ENCODE measurements at regions of chr17 and their contacts with region 1.

Region 1: DNA sequence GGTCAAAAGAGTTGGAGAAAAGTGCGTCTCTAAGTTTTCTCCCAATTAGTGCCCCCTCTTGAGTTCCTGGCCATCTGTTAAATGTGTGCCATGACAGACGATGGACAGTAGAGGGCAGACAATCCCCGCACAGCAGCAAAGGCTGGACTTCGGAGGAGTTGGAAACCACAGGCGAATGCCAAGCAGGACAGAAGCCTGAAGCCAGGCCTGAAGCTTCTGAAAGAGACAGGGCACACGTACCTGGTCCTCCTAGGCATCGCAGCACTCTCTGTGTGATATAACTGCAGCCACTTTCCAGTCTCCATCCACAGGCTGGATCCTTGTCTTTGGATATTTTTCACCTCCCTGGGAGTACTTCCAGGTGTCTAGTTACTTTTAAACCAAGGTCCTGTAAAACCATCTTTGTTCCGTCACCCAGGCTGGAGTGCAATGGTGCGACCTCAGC is 14.5 kb downstream of the C17orf100 start:
- DNase-seq: peak; percentile 72
- H3K4me3 Mint-ChIP-seq: no peak overlapping the region
- H3K27ac Mint-ChIP-seq: no peak overlapping the region
- H3K4me1 Mint-ChIP-seq: peaks cover 15% of the 10 kb centered on the region
- H3K27me3 Mint-ChIP-seq: peaks cover 17% of the 10 kb centered on the region
- CTCF ChIP-seq: peak; percentile 81

Region 2: DNA sequence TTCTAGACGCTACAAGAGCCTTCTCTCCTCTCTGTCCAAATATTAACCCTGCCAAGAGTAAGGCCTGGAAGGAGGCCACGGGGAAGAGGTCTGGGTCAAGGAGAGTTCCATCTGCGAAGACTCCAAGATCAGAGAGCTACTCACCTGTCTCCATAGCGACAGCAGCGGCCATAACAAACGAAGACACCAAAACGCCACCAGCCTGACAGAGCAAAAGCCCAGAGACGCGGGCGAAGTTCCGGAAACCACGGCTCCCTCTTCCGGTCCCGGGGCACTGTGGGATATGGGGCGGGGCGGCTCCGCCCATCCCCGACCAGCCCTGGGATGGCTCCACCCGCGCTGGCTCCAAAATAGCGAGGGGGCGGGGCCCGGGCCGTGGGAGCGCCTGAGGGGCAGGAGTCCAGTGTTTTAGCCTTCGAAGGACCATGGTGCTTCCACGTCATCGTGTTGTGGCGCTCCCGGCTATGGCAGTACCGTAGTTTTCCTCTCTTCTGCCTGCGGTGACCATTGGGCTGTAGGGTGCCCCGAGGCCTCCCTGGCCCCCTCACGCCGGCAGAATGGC is 14.7 kb before region 1 on chr17 and contains the starts of genes C17orf100 and MED31:
- CTCF ChIA-PET with region 1: no interaction called
- intact Hi-C with region 1: no loop called
- DNase-seq: peak; percentile 95
- H3K4me3 Mint-ChIP-seq: peak within 1 kb of the TSS; percentile 89
- H3K27ac Mint-ChIP-seq: peak within 1 kb of the TSS; percentile 92
- H3K4me1 Mint-ChIP-seq: peaks cover 26% of the 10 kb centered on the region
- H3K27me3 Mint-ChIP-seq: no peaks in the 10 kb centered on the region
- CTCF ChIP-seq: no peak
- total RNA-seq, gene C17orf100: 1.8 and 3.1 TPM in 2 replicates
- total RNA-seq, gene MED31: 15.1 and 19.9 TPM in 2 replicates

Region 3: DNA sequence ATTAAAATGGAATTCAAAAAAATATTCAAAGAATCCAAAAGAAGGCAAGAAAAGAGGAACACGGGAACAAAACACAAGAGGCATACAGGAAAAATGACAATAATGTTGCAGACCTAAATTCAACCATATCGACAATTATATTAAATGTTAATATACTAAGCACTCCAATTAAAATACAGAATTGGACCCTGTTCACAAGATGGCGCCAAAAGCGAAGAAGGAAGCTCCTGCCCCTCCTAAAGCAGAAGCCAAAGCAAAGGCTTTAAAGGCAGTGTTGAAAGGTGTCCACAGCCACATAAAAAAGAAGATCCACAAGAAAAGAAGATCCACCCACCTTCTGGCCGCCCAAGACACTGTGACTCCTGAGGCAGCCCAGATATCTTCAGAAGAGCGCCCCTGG is 83.4 kb after region 1 on chr17:
- CTCF ChIA-PET with region 1: no interaction called
- intact Hi-C with region 1: no loop called
- DNase-seq: no peak
- H3K4me3 Mint-ChIP-seq: no peak overlapping the region
- H3K27ac Mint-ChIP-seq: no peak overlapping the region
- H3K4me1 Mint-ChIP-seq: peaks cover 16% of the 10 kb centered on the region
- H3K27me3 Mint-ChIP-seq: peaks cover 10% of the 10 kb centered on the region
- CTCF ChIP-seq: no peak

Region 4: GRCh38 chr17:6843241-6843880 is 177.3 kb after region 1 on chr17:
- CTCF ChIA-PET with region 1: interaction called, 6 read pairs
- intact Hi-C with region 1: loop called (anchors 5 kb)
- DNase-seq: no peak
- H3K4me3 Mint-ChIP-seq: no peak overlapping the region
- H3K27ac Mint-ChIP-seq: no peak overlapping the region
- H3K4me1 Mint-ChIP-seq: no peaks in the 10 kb centered on the region
- H3K27me3 Mint-ChIP-seq: peaks cover 7% of the 10 kb centered on the region
- CTCF ChIP-seq: no peak

Region 5: GRCh38 chr17:6913608-6914443 is 247.7 kb after region 1 on chr17:
- CTCF ChIA-PET with region 1: interaction called, 3 read pairs
- intact Hi-C with region 1: loop called (anchors 5 kb)
- DNase-seq: peak; percentile 61
- H3K4me3 Mint-ChIP-seq: peak overlapping the region; percentile 13
- H3K27ac Mint-ChIP-seq: no peak overlapping the region
- H3K4me1 Mint-ChIP-seq: peaks cover 13% of the 10 kb centered on the region
- H3K27me3 Mint-ChIP-seq: peaks cover 47% of the 10 kb centered on the region
- CTCF ChIP-seq: peak; percentile 75

Region 6: DNA sequence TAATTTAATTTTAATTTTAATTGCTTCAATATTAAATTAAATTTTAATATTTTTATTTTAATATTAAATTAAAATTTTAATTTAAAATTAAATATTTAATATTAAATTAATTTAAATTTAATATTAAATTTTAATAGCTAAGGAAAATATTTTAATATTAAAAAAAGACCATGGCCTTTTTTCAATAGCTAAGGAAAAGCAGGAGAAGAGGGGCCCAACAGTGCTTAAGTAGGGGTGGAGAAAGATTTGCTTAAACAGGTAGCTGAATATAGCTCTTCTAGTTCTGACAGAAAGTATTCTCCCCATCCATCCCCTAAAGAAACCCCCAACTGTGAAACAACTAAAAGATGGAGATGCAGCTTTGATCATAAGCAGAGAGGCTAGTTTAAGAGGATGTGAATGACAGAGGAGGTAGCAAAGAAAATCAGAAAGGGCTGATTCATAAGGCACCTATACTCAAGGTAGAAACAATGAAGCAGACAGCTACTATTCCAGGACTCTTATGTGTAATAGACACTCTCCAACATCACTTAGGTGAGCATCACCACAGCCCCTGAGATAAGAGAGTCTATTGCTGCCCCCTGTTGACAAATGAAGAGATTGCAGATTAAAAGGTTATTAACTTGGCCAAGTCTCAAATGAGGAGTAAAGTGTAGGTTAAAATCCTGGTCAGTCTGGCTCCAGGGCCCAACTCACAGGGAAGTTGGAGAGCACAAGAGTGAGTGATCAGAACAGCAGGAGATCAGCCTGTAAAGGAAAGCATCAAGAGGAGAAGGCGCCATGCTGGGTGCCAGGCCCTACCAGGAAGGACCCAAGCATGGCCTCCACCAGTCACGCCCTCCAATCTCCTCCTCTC is 338.5 kb after region 1 on chr17:
- CTCF ChIA-PET with region 1: interaction called, 3 read pairs
- intact Hi-C with region 1: loop called (anchors 5 kb)
- DNase-seq: peak; percentile 45
- H3K4me3 Mint-ChIP-seq: no peak overlapping the region
- H3K27ac Mint-ChIP-seq: no peak overlapping the region
- H3K4me1 Mint-ChIP-seq: no peaks in the 10 kb centered on the region
- H3K27me3 Mint-ChIP-seq: no peaks in the 10 kb centered on the region
- CTCF ChIP-seq: peak; percentile 42